Activated CD4-positive, alpha-beta memory T cell treated with anti-CD3 and anti-CD28 coated beads for 36 hours (primary cell): ENCODE measurements at regions of chr1 and their contacts with region 1.

Region 1: GRCh38 chr1:47437447-47438164 is at the start of gene FOXD2:
- DNase-seq: peak; percentile 93
- H3K4me3 Mint-ChIP-seq: peak within 1 kb of the TSS; percentile 95
- H3K27ac Mint-ChIP-seq: peak within 1 kb of the TSS; percentile 69
- H3K4me1 Mint-ChIP-seq: peaks cover 26% of the 10 kb centered on the region
- H3K27me3 Mint-ChIP-seq: peaks cover 13% of the 10 kb centered on the region
- total RNA-seq, gene FOXD2: 0.10 to 0.26 TPM

Region 2: GRCh38 chr1:47179017-47179987 is 258.3 kb before region 1 on chr1:
- CTCF ChIA-PET with region 1: interaction called, 30 read pairs
- POLR2A ChIA-PET with region 1: no interaction called
- intact Hi-C with region 1: loop called (anchors 5 kb)
- DNase-seq: peak; percentile 91
- H3K4me3 Mint-ChIP-seq: peak overlapping the region; percentile 74
- H3K27ac Mint-ChIP-seq: no peak overlapping the region
- H3K4me1 Mint-ChIP-seq: peaks cover 8% of the 10 kb centered on the region
- H3K27me3 Mint-ChIP-seq: peaks cover 29% of the 10 kb centered on the region

Region 3: DNA sequence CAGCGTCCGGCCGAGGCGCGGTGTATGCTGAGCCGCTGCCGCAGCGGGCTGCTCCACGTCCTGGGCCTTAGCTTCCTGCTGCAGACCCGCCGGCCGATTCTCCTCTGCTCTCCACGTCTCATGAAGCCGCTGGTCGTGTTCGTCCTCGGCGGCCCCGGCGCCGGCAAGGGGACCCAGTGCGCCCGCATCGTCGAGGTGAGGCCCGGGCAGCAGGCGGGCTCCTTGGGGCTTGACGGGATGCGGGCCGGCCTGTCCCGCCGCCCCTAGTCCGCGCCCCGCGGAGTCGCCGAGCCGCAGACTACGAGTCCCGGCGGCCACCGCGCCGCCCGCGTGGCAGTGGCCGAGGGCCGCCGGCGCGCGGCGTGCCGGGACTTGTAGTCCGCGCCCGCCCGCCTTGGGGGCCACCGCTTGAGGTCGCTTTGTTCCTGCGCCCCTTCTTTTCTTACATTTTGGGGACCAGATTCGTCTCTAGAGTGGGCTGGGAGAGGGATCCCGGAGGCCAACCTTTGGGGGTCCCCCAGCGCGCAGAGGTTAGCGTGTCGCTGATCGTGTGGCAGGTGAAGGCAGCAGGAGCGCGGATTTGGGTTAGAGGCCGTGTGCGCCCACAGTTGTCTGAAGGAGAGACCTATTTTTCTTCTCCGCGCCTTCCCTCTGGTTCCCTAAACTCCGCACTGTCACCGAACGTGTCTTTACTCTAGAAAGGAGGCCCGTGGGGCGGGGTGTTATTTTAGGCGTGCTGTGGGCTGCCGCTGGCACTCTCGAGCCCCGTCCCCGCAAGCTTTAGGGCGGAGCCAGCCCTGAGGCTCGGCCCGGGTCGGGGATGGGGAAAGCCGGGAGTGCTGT is 103.5 kb before region 1 on chr1:
- CTCF ChIA-PET with region 1: interaction called, 9 read pairs
- POLR2A ChIA-PET with region 1: interaction called, 7 read pairs
- intact Hi-C with region 1: loop called (anchors 2 kb)
- DNase-seq: peak; percentile 79
- H3K4me3 Mint-ChIP-seq: no peak overlapping the region
- H3K27ac Mint-ChIP-seq: peak overlapping the region; percentile 95
- H3K4me1 Mint-ChIP-seq: peaks cover 21% of the 10 kb centered on the region
- H3K27me3 Mint-ChIP-seq: no peaks in the 10 kb centered on the region

Region 4: GRCh38 chr1:47415728-47416318 is 21.8 kb before region 1 on chr1 and contains the start of gene FOXE3:
- CTCF ChIA-PET with region 1: interaction called, 10 read pairs
- POLR2A ChIA-PET with region 1: no interaction called
- intact Hi-C with region 1: no loop called
- DNase-seq: no peak
- H3K4me3 Mint-ChIP-seq: peak within 1 kb of the TSS; percentile 48
- H3K27ac Mint-ChIP-seq: no peak within 1 kb of the TSS
- H3K4me1 Mint-ChIP-seq: peaks cover 2% of the 10 kb centered on the region
- H3K27me3 Mint-ChIP-seq: peaks cover 30% of the 10 kb centered on the region
- total RNA-seq, gene FOXE3: not detected

Region 5: GRCh38 chr1:47507881-47508701 is 70.5 kb after region 1 on chr1:
- CTCF ChIA-PET with region 1: interaction called, 4 read pairs
- POLR2A ChIA-PET with region 1: no interaction called
- intact Hi-C with region 1: loop called (anchors 2 kb)
- DNase-seq: peak; percentile 55
- H3K4me3 Mint-ChIP-seq: no peak overlapping the region
- H3K27ac Mint-ChIP-seq: no peak overlapping the region
- H3K4me1 Mint-ChIP-seq: peaks cover 4% of the 10 kb centered on the region
- H3K27me3 Mint-ChIP-seq: peaks cover 68% of the 10 kb centered on the region

Region 6: GRCh38 chr1:47710329-47711071 is 272.9 kb after region 1 on chr1:
- CTCF ChIA-PET with region 1: interaction called, 237 read pairs
- POLR2A ChIA-PET with region 1: interaction called, 4 read pairs
- intact Hi-C with region 1: loop called (anchors 2 kb)
- DNase-seq: peak; percentile 77
- H3K4me3 Mint-ChIP-seq: peak overlapping the region; percentile 18
- H3K27ac Mint-ChIP-seq: no peak overlapping the region
- H3K4me1 Mint-ChIP-seq: peaks cover 7% of the 10 kb centered on the region
- H3K27me3 Mint-ChIP-seq: peaks cover 69% of the 10 kb centered on the region

Region 7: GRCh38 chr1:47755101-47755990 is 317.7 kb after region 1 on chr1:
- CTCF ChIA-PET with region 1: interaction called, 11 read pairs
- POLR2A ChIA-PET with region 1: no interaction called
- intact Hi-C with region 1: no loop called
- DNase-seq: peak; percentile 70
- H3K4me3 Mint-ChIP-seq: no peak overlapping the region
- H3K27ac Mint-ChIP-seq: no peak overlapping the region
- H3K4me1 Mint-ChIP-seq: no peaks in the 10 kb centered on the region
- H3K27me3 Mint-ChIP-seq: peaks cover 9% of the 10 kb centered on the region